CD4-positive, alpha-beta memory T cell (primary cell): ENCODE measurements at regions of chr15 and their contacts with region 1.

Region 1: DNA sequence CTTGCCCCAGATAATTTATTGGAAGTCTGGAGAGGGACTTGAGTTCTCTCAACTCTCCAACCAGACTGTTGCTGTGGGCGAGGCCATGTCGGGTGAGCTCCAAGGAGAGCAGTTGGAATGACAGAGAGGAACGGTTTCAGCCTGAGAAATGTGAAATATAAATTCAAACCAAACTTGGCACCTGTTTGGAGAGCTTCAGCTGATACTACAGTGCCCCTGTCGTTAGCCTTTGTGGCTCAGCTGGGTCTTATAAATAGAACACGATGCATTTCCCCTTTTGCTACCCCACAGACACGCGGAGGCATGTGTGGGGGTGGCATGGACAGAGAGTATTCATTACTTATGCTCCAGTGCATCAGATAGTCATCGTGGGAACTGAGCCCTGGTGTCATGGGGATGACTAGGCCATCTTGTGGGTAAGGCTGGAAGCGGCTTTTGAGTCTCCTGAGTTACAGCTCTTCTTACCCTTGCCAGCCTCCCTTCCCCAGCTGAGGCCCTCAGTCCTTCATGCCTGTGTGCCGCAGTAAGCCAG is 15.6 kb downstream of the SMAD3 start:
- DNase-seq: peak in 2 of 5 donors; percentile 32 to 71
- H3K4me3 ChIP-seq: no peak overlapping the region
- H3K4me3 Mint-ChIP-seq: peak overlapping the region in 7 of 8 donors; percentile 37 to 93 (median 72)
- H3K27ac ChIP-seq: peak overlapping the region; percentile 58
- H3K27ac Mint-ChIP-seq: peak overlapping the region; percentile 92 to 98 (median 95)
- H3K4me1 ChIP-seq: peaks cover 99% of the 10 kb centered on the region
- H3K4me1 Mint-ChIP-seq: peaks cover 79 to 98% (median 92%) of the 10 kb centered on the region in 4 donors
- H3K27me3 ChIP-seq: no peaks in the 10 kb centered on the region
- H3K27me3 Mint-ChIP-seq: no peaks in the 10 kb centered on the region

Region 2: GRCh38 chr15:66946578-66947164 is 134.3 kb before region 1 on chr15:
- CTCF ChIA-PET with region 1: interaction called, 5 read pairs
- POLR2A ChIA-PET with region 1: no interaction called
- intact Hi-C with region 1: loop called (anchors 5 kb)
- DNase-seq: peak; percentile 65 to 73 (median 71)
- H3K4me3 ChIP-seq: no peak overlapping the region
- H3K4me3 Mint-ChIP-seq: no peak overlapping the region
- H3K27ac ChIP-seq: no peak overlapping the region
- H3K27ac Mint-ChIP-seq: no peak overlapping the region
- H3K4me1 ChIP-seq: no peaks in the 10 kb centered on the region
- H3K4me1 Mint-ChIP-seq: peaks cover 0 to 4% (median 2%) of the 10 kb centered on the region in 4 donors
- H3K27me3 ChIP-seq: no peaks in the 10 kb centered on the region
- H3K27me3 Mint-ChIP-seq: no peaks in the 10 kb centered on the region

Region 3: DNA sequence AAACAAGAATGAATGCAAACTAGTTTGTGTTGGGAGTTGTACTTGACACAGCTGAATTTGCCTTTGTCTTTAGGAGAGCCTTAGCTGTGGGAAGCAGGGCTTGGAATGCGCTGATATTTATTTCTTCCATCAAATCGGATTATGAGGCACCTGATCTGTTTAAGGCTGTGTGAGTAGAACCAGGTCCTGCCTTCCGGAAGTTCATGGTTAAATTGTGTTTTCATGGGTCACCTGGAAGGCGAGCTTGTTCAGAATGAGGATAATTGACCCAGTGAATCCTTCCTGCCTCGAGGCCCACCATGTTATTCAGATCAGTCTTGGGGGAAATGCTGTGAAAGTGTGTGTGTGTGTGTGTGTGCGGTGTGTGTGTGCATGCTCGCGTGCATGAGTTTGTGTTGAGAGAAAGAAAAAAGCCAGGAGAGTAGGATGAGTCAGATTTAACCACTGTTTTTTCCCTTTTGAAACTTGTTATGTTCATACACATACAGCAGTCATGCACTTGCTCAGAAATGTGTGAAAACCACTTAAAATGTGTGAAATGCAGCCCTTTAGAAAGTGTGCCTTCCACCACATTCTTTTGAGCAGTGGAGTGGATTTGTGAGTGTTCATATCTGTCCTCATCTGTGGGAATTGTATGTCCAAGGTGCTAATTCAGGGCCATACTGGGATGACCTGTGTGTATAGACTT is 21.1 kb after region 1 on chr15:
- CTCF ChIA-PET with region 1: interaction called, 38 read pairs
- POLR2A ChIA-PET with region 1: interaction called, 382 read pairs
- intact Hi-C with region 1: loop called (anchors 1 kb)
- DNase-seq: peak; percentile 57 to 77 (median 66)
- H3K4me3 ChIP-seq: peak overlapping the region; percentile 12 to 28
- H3K4me3 Mint-ChIP-seq: no peak overlapping the region
- H3K27ac ChIP-seq: peak overlapping the region; percentile 75
- H3K27ac Mint-ChIP-seq: no peak overlapping the region
- H3K4me1 ChIP-seq: peaks cover 99% of the 10 kb centered on the region
- H3K4me1 Mint-ChIP-seq: peaks cover 26 to 55% (median 27%) of the 10 kb centered on the region in 4 donors
- H3K27me3 ChIP-seq: no peaks in the 10 kb centered on the region
- H3K27me3 Mint-ChIP-seq: no peaks in the 10 kb centered on the region

Region 4: GRCh38 chr15:67120839-67121643 is 40.1 kb after region 1 on chr15:
- CTCF ChIA-PET with region 1: interaction called, 5 read pairs
- POLR2A ChIA-PET with region 1: interaction called, 82 read pairs
- intact Hi-C with region 1: no loop called
- DNase-seq: peak; percentile 84 to 96 (median 87)
- H3K4me3 ChIP-seq: peak overlapping the region in 1 of 2 donors; percentile 45
- H3K4me3 Mint-ChIP-seq: peak overlapping the region; percentile 74 to 87 (median 82)
- H3K27ac ChIP-seq: peak overlapping the region; percentile 80
- H3K27ac Mint-ChIP-seq: peak overlapping the region; percentile 92 to 100 (median 98)
- H3K4me1 ChIP-seq: peaks cover 100% of the 10 kb centered on the region
- H3K4me1 Mint-ChIP-seq: peaks cover 63 to 99% (median 90%) of the 10 kb centered on the region in 4 donors
- H3K27me3 ChIP-seq: no peaks in the 10 kb centered on the region
- H3K27me3 Mint-ChIP-seq: no peaks in the 10 kb centered on the region

Region 5: DNA sequence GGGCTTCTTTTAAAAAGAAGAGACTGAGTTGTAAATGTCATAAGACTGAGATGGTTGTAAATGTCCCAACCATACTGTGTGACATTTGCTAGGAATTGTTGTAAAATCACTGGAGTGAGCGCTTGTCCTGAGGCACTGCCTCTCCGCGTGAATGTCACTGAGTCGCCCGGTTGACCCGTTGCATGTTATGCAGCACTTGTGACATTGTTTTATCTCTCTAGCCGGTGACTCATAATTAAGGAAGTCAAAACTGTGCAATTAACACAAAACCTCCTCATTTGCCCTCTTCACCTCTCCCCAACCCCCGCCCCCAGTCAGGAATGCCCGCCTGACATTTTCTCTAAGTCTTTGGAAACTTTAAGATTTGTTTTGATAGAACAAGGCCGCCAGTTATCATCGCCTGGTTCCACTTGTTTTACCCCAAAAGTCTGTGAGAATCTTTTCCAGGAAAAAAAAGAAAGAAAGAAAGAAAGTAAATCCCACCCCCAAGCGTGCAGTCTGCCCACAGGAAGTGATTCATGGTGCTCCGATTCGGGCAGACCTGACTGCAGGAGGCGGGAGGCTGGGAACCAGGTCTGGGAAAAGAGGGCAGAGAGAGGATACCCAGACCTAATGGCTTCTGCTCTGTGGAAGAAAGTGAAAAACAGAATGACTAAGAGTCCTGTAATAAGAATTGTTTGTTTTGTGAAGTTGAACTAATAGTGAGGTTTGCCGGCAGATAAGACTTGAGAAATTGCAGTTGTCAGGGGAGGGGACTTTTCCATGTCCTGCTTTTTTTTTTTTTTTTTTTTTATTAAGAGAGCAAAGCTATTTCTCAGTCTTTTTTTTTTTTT is 69.3 kb after region 1 on chr15:
- CTCF ChIA-PET with region 1: no interaction called
- POLR2A ChIA-PET with region 1: interaction called, 3 read pairs
- intact Hi-C with region 1: loop called (anchors 2 kb)
- DNase-seq: peak in 1 of 5 donors; percentile 68
- H3K4me3 ChIP-seq: peak overlapping the region; percentile 2 to 23
- H3K4me3 Mint-ChIP-seq: peak overlapping the region; percentile 47 to 90 (median 73)
- H3K27ac ChIP-seq: peak overlapping the region; percentile 27
- H3K27ac Mint-ChIP-seq: peak overlapping the region; percentile 43 to 95 (median 77)
- H3K4me1 ChIP-seq: peaks cover 68% of the 10 kb centered on the region
- H3K4me1 Mint-ChIP-seq: peaks cover 63 to 79% (median 72%) of the 10 kb centered on the region in 4 donors
- H3K27me3 ChIP-seq: no peaks in the 10 kb centered on the region
- H3K27me3 Mint-ChIP-seq: no peaks in the 10 kb centered on the region